ENCODE measurements at regions of chr2 and their contacts with region 1.

Region 1: GRCh38 chr2:239288951-239289511 is 111.8 kb downstream of the HDAC4 start:
- DNase-seq: peak; percentile 48
- H3K4me3 Mint-ChIP-seq: peak overlapping the region; percentile 72
- H3K27ac Mint-ChIP-seq: peak overlapping the region; percentile 98
- H3K4me1 Mint-ChIP-seq: peaks cover 65% of the 10 kb centered on the region
- H3K27me3 Mint-ChIP-seq: no peaks in the 10 kb centered on the region

Region 2: DNA sequence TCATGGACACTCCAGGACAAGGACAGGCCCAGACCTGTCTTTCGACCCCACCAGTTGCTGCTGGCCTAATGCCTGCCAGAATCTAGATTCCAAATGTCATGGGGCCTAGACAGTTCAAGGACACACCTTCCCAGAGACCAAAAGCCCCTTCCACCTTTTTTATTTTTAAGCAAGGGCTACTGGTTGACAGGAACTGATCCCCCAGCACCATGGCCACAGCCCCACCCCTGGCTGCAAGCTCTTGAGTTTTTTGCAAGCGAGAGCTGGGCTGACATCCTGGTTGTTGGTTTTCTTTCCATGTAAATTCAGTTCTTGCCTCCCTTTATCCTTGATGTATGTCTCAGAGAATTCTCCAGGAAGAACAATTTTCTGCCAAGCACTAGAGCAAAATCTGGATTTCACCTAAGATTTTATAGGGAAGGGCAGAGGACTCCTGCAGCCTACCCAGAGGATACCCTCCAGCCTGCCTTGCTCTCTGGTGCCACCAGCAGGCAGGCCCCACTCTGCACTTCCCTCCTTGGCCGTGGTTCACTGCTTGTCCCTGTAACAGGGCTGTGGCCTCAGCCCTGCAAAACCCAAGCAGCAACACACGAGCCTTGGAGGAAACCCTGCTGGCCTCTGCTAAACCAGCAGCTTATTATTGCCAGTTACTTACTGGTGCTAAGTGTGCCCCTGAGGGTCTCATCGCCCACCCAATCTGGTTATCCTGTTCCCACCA is 343.4 kb before region 1 on chr2:
- intact Hi-C with region 1: no loop called
- DNase-seq: peak; percentile 8
- H3K4me3 Mint-ChIP-seq: no peak overlapping the region
- H3K27ac Mint-ChIP-seq: no peak overlapping the region
- H3K4me1 Mint-ChIP-seq: peaks cover 10% of the 10 kb centered on the region
- H3K27me3 Mint-ChIP-seq: no peaks in the 10 kb centered on the region

Region 3: DNA sequence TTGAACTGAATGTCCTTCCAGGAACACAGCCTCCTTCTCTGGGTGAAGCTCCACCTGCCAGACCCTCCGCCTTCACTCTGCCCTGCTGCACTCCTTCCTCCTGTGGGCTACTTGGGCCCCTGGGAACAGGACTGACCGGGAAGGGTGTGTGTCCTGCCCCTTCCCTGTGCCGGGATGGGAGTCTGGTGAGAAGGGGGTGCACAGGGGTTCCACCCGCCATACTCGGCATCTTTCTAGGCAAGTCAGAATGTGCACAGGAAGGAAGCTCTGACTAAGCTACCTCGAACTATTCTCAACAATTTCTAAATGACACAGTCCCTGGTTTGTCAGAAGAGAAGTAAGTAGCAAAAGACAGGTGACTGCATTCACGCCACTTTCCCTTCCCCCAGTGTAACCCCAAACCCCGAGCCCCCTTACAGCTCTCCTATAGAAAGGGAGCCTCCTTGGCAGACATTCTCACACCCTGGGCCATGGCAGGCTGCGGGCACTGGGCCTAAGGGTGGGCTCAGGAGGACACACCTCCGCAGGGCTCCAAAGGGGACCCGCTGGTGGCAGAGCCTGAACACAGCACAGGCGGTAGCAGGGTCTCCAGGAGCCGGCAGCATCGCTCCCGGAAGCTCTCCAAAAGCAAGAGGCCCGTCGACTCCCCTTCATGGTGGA is 72.3 kb before region 1 on chr2:
- intact Hi-C with region 1: loop called (anchors 2 kb)
- DNase-seq: peak; percentile 32
- H3K4me3 Mint-ChIP-seq: peak overlapping the region; percentile 65
- H3K27ac Mint-ChIP-seq: peak overlapping the region; percentile 88
- H3K4me1 Mint-ChIP-seq: peaks cover 53% of the 10 kb centered on the region
- H3K27me3 Mint-ChIP-seq: no peaks in the 10 kb centered on the region

Region 4: DNA sequence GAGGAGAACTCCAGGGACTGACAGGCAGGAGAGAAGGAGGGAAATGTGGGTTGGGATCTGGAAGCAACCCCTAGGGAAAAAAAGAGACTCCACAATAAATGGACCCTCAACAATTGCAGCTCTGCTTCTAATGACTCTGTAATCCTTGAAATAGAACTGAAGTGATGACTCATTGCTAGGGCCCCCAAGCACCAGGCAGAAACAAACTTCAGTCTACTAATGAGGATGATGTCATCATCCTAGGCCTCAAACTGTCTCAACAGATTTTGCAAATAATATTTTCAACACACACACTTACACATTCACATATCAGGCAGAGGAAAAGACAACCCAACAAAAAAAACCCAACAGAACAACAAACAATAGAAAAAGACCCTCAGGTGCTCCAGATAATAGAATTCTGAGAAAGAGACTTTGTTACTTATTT is 31.5 kb before region 1 on chr2:
- intact Hi-C with region 1: loop called (anchors 2 kb)
- DNase-seq: no peak
- H3K4me3 Mint-ChIP-seq: peak overlapping the region; percentile 42
- H3K27ac Mint-ChIP-seq: peak overlapping the region; percentile 85
- H3K4me1 Mint-ChIP-seq: peaks cover 85% of the 10 kb centered on the region
- H3K27me3 Mint-ChIP-seq: no peaks in the 10 kb centered on the region

Region 5: DNA sequence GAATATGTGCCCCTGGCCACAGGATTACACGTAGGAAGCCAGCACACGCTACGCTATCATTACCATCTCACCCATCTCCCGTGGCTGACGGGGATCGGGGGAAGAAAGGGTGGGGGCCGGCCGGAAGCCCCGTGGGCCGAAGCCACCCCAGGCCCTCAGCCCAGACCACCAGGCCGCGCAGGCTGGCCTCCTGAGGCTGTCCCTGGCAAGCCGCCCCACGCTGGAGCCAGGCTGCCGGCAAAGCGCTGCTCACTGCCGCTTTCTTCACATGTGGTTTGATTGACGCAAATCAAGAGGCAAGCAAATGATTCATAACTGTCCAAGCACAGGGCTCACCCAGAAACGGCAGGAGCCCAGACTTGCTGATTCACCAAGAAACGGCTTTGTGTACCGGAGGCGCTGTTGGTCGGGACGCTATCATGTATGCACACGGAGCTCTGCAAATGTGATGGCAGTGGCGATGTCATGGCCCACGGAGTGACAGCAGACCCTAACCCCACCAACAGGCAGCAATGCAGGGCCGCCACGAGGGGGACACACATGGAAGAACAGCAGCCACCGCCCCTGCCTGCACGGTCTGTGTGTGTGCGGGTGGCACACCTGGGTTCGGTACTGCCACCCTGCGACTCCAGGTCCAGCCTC is 13.9 kb before region 1 on chr2:
- intact Hi-C with region 1: loop called (anchors 1 kb)
- DNase-seq: peak; percentile 81
- H3K4me3 Mint-ChIP-seq: peak overlapping the region; percentile 58
- H3K27ac Mint-ChIP-seq: peak overlapping the region; percentile 86
- H3K4me1 Mint-ChIP-seq: peaks cover 69% of the 10 kb centered on the region
- H3K27me3 Mint-ChIP-seq: peaks cover 2% of the 10 kb centered on the region

Region 6: DNA sequence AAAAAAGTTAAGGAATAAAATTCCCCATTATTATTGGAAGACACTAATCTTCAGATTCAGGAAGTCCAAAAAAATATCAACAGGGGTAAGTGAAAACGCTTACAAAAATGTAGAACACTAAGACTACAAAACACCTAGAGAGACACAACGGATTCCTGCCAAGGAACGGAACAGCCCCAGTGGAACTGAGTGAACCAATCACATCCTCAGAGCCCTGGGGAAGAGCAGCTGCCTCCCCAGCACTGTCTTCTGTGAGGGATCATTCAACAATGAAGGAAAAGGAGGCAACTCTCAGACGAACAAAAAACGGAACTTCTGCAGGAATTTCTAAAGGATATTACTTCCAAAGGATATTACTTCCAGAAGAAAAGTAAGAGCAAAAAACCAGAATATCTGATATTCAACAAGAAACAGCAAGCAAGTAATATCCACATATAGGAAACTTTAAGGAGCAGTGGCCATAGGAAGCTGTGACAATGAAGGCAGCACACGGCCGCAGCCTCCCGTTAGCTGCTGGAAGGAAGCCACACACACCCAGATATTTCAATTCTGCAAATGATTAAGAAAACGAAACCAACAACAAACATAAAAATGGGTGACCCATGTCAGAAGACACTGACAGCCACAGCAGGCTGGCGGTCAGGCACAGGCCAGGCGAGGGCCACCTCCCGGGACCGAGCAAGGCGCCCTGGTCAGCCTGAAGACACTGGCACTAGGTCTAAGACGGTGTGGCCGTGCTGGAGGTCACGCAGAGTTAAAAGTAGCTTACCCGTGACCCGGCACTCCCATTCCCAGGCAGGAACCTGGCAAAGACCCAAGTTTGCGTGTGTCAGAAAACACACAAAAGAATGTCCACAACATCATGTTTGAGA is 30.0 kb after region 1 on chr2:
- intact Hi-C with region 1: loop called (anchors 1 kb)
- DNase-seq: no peak
- H3K4me3 Mint-ChIP-seq: peak overlapping the region; percentile 81
- H3K27ac Mint-ChIP-seq: peak overlapping the region; percentile 86
- H3K4me1 Mint-ChIP-seq: peaks cover 70% of the 10 kb centered on the region
- H3K27me3 Mint-ChIP-seq: no peaks in the 10 kb centered on the region

Measured in activated T-helper 2 cell treated with anti-CD3 and anti-CD28 coated beads, Interferon-gamma antibody, Interleukin-2, Interleukin-4, amounts not matched to agents 10 μg/mL and 5 μg/mL and 100 μg/mL, durations not matched to agents 14 hours and 24 hours and 36 hours (primary cell).